Posterior vena cava (tissue), 2 donors: ENCODE measurements at regions of chr3 and their contacts with region 1.

Region 1: GRCh38 chr3:119413603-119414280 is 49.7 kb downstream of the TMEM39A start:
- DNase-seq: no peak

Region 2: GRCh38 chr3:119428538-119428937 is 14.8 kb after region 1 on chr3:
- intact Hi-C with region 1: loop called in 1 of 2 experiments (anchors 1 kb)
- DNase-seq: no peak